ENCODE measurements at regions of chr2 and their contacts with region 1.

Region 1: DNA sequence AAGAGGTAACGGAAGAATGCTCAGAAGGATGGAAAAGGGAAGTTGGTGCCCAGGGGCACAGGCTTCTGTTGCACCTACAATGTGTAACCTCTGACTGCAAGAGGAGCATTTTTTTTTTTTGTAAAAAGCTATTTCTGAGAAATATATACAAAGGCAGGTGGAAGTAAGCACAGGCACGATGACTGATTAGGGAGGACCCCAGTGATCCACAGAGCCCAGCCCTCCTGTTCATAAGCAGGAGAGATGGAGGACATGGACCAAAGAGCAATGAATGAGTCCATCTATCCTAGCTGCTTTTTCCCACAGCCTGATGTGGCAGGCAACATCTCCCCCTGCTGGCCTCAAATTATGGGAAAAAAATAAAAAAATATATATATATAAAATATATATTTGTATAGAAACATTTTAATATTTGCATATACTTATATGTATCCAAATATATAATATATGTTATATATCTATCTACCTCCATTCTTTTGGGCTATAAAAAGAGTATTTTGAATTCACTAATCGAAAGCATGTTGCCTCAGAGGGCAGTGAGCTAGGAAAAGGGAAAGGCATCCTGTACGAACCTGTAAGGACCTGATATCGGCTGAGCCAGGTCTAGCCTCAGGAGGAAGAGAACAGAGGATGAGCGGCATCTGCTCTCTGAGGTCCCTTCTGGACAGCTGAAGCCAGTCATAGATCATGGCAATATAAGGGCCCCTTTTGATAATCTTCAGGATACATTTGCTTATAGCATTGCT is 166.0 kb upstream of the STK17B start:
- DNase-seq: no peak
- H3K4me3 ChIP-seq: no peak overlapping the region
- CTCF ChIP-seq: peak; percentile 39

Region 2: GRCh38 chr2:196068271-196069209 is 268.8 kb before region 1 on chr2 and contains the start of gene DNAH7:
- CTCF ChIA-PET with region 1: interaction called, 151 read pairs
- POLR2A ChIA-PET with region 1: no interaction called
- DNase-seq: no peak
- H3K4me3 ChIP-seq: peak within 1 kb of the TSS; percentile 99
- CTCF ChIP-seq: peak; percentile 98

Region 3: GRCh38 chr2:196171248-196171871 is 166.0 kb before region 1 on chr2 and contains the start of gene STK17B:
- CTCF ChIA-PET with region 1: interaction called, 13 read pairs
- POLR2A ChIA-PET with region 1: no interaction called
- DNase-seq: peak; percentile 44
- H3K4me3 ChIP-seq: peak within 1 kb of the TSS; percentile 83
- CTCF ChIP-seq: peak; percentile 0

Region 4: DNA sequence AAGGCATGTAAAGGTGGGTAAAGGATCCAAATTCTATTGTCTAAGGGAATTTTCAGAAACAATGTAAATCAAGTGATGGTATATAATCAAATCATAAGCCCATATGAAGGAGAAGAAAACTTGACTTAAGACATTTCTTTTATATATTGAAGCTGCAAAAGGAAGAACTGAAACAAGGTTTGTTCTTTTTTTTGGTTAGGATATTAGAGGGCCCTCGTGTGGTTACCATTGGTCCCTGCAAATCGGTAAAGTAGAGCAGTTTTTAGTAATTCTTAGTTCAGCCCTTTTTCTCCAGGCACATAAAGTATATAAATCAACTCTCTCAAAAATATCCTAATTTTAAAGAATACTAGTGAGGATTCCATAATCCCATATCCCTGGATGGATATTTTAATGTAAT is 60.4 kb before region 1 on chr2:
- CTCF ChIA-PET with region 1: interaction called, 26 read pairs
- POLR2A ChIA-PET with region 1: interaction called, 3 read pairs
- DNase-seq: no peak
- H3K4me3 ChIP-seq: no peak overlapping the region
- CTCF ChIP-seq: peak; percentile 42

Region 5: GRCh38 chr2:196309691-196310090 is 27.7 kb before region 1 on chr2:
- CTCF ChIA-PET with region 1: interaction called, 47 read pairs
- POLR2A ChIA-PET with region 1: no interaction called
- DNase-seq: no peak
- H3K4me3 ChIP-seq: no peak overlapping the region
- CTCF ChIP-seq: no peak

Region 6: DNA sequence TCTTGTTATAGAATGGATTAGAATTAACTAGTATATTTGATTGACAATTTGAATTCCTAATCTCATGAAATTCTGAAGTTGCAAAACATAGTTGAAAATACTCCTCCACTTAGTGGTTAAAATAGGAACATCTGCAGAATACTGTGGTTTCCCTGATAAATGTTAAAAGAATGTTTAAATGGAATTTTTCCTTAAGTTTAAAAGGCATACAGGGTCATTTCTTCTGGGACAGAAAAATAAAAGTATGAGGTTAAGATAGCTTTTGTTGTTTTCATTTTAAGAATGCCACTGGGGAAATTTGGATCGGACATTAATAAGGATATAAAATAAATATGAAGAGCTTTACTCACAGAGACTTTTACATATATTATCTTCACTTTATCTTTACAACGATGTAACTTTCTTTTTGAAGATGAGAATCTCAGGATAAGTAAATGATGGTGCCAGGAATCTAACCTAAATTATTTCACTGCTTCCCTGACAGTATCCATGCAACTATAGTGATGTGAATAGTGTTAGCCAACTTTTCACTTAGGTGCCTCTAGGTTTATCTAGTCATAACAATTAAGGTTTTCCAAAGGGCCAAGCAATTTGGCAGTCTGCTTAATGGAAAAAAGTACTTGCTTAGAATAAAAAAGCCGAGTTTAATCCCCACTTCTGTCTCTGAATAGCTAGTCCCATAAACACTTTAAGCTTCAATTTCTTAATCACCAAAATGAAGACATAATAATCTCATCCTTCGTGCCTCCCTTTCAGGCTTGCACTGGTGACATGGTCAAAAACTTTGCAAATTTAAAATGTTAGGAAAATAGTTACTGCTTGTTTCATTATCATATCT is 14.2 kb before region 1 on chr2:
- CTCF ChIA-PET with region 1: interaction called, 39 read pairs
- POLR2A ChIA-PET with region 1: interaction called, 3 read pairs
- DNase-seq: peak; percentile 42
- H3K4me3 ChIP-seq: no peak overlapping the region
- CTCF ChIP-seq: no peak

Region 7: DNA sequence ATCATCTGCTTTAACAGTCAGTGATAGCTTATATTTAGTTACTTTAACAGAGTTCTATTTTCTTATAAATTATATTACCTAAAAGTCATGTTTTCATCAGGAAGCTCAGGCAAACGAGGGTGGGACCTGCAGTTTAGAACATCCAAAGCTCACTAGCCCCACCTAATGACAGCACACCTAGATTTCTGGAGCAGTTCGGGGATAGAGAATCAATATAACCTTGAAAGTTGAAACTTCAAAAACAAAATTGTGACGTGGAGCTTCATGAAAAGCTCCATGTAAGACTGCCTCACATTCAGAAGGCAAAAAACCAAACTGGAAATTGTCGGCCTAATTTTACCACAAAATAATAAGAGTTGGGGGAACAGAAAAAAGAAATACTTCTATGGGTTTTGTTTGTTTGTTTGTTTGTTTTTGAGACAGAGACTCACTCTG is 116.2 kb after region 1 on chr2:
- CTCF ChIA-PET with region 1: interaction called, 48 read pairs
- POLR2A ChIA-PET with region 1: no interaction called
- DNase-seq: peak; percentile 14
- H3K4me3 ChIP-seq: no peak overlapping the region
- CTCF ChIP-seq: peak; percentile 52

Measured in AG04449 (cell line).